PC-3 (cell line): ENCODE measurements at regions of chr11 and their contacts with region 1.

Region 1: DNA sequence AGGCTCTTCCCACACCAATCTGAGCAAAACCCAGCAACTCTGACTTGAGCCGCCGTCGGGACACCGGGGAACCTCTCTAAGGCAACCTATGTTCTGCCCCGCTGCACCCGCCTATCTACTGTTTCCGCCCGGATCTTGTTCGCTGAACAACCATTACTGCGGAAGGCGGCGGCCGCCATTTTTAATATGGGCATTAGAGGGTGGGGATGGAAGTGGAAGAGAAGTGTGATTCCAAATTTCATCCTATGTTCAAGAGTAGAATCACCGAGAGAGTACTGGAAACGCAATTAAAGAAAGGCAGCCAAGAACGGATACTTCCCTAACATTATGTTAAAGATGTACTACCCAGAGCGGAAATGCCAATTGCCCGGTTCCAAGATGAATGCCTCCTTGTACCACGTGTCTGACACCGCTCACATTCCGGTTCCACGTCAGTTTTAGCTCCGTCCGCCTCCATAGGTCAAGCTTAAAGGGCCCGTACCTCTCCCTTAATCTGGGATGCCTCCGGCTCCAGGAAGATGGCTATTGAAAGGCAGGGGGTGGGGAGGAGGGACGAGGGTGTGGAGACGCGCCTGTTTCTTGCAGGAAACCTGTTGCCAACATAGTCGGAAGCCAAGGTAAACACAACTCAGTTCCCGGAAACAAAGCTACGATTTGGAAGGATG is at the start of gene DPAGT1:
- DNase-seq: peak; percentile 99
- ATAC-seq: peak; percentile 81
- H3K4me3 ChIP-seq: peak within 1 kb of the TSS; percentile 89
- H3K27ac ChIP-seq: peak within 1 kb of the TSS; percentile 84
- H3K4me1 ChIP-seq: peaks cover 24% of the 10 kb centered on the region
- H3K27me3 ChIP-seq: no peaks in the 10 kb centered on the region
- CTCF ChIP-seq: no peak
- total RNA-seq, gene DPAGT1: 68.0 and 82.4 TPM in 2 replicates

Region 2: DNA sequence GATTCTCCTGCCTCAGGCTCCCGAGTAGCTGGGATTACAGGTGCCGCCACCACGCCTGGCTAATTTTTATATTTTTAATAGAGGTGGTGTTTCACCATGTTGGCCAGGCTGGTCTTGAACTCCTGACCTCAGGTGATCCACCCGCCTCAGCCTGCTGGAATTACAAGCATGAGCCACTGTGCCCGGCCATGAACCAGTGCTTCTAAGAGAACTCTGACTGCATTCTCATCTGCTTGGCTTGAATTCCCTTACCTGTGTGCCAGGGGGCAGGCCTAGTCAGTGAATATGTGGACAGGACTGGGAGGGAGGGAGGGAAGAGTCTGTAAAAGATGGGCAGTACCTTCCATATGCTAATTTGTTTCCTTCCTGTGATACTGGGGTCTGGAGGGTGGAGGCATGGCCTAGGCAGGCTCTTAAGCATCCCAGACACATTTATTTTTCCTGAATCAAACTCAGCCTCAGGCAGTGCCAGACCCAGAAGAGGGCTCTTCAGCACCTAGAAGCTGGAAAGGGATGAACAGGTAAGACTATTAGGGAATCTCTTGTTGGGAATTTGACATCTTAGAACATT is 90.3 kb before region 1 on chr11:
- CTCF ChIA-PET with region 1: no interaction called
- POLR2A ChIA-PET with region 1: interaction called, 10 read pairs
- intact Hi-C with region 1: no loop called
- DNase-seq: no peak
- ATAC-seq: peak; percentile 21
- H3K4me3 ChIP-seq: no peak overlapping the region
- H3K27ac ChIP-seq: no peak overlapping the region
- H3K4me1 ChIP-seq: peaks cover 6% of the 10 kb centered on the region
- H3K27me3 ChIP-seq: no peaks in the 10 kb centered on the region
- CTCF ChIP-seq: no peak

Region 3: GRCh38 chr11:119030329-119031049 is 71.4 kb before region 1 on chr11 and contains the start of gene SLC37A4:
- CTCF ChIA-PET with region 1: no interaction called
- POLR2A ChIA-PET with region 1: no interaction called
- intact Hi-C with region 1: loop called (anchors 2 kb)
- DNase-seq: peak; percentile 100
- ATAC-seq: peak; percentile 84
- H3K4me3 ChIP-seq: peak within 1 kb of the TSS; percentile 96
- H3K27ac ChIP-seq: peak within 1 kb of the TSS; percentile 15; the same call in 1 of the 2 replicates
- H3K4me1 ChIP-seq: peaks cover 16% of the 10 kb centered on the region
- H3K27me3 ChIP-seq: no peaks in the 10 kb centered on the region
- CTCF ChIP-seq: peak; percentile 93
- total RNA-seq, gene SLC37A4: 31.4 and 35.4 TPM in 2 replicates

Region 4: GRCh38 chr11:119067371-119068222 is 34.3 kb before region 1 on chr11 and contains the start of gene VPS11:
- CTCF ChIA-PET with region 1: interaction called, 3 read pairs
- POLR2A ChIA-PET with region 1: interaction called, 18 read pairs
- intact Hi-C with region 1: loop called (anchors 2 kb)
- DNase-seq: peak; percentile 99
- ATAC-seq: peak; percentile 98
- H3K4me3 ChIP-seq: peak within 1 kb of the TSS; percentile 87
- H3K27ac ChIP-seq: peak within 1 kb of the TSS; percentile 43
- H3K4me1 ChIP-seq: peaks cover 14% of the 10 kb centered on the region; the same call in 1 of the 2 replicates
- H3K27me3 ChIP-seq: no peaks in the 10 kb centered on the region
- CTCF ChIP-seq: no peak
- total RNA-seq, gene VPS11: 48.3 and 48.7 TPM in 2 replicates

Region 5: DNA sequence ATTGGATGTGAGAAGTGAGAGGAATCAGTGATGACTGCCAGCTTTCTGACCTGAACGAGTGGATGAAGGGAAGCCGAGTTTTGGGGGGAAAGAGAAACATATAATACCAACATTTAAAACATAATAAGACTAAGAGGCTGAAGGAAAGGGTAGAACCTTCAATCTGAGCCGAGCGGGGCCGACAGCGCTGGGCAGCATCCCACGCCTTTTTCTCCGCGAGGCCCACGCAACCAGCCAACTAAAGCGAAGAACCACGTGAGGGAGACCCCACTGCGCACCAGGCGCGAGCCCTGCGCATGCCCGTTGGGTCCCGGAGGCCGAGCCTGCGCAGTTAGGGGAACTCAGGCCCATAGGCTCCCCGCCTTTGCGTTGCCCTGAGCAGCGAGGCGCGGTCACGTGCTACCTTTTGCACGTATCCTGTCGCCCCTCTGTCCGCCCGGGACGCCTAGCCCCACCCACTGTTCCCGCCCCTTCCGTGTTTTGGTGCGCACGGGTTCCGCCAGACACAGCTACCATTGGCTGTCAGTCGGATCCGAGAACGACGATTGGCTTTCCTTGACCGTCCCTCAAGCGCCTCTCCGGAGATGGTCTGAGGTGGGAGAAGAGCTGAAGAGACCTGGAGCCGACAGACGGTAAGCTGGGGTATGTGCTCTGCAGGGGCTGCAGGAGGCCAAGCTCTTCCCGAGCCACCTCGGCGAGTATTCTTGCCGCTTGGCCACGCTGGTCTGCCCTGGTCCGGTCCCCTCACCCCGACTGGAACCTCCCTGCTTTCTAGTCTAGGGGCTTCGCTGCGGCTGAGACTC is 19.3 kb after region 1 on chr11 and contains the start of gene HINFP:
- CTCF ChIA-PET with region 1: interaction called, 8 read pairs
- POLR2A ChIA-PET with region 1: interaction called, 14 read pairs
- intact Hi-C with region 1: loop called (anchors 2 kb)
- DNase-seq: peak; percentile 100
- ATAC-seq: peak; percentile 96
- H3K4me3 ChIP-seq: peak within 1 kb of the TSS; percentile 91
- H3K27ac ChIP-seq: peak within 1 kb of the TSS; percentile 35
- H3K4me1 ChIP-seq: peaks cover 15% of the 10 kb centered on the region
- H3K27me3 ChIP-seq: no peaks in the 10 kb centered on the region
- CTCF ChIP-seq: no peak
- total RNA-seq, gene HINFP: 14.7 and 24.7 TPM in 2 replicates

Region 6: DNA sequence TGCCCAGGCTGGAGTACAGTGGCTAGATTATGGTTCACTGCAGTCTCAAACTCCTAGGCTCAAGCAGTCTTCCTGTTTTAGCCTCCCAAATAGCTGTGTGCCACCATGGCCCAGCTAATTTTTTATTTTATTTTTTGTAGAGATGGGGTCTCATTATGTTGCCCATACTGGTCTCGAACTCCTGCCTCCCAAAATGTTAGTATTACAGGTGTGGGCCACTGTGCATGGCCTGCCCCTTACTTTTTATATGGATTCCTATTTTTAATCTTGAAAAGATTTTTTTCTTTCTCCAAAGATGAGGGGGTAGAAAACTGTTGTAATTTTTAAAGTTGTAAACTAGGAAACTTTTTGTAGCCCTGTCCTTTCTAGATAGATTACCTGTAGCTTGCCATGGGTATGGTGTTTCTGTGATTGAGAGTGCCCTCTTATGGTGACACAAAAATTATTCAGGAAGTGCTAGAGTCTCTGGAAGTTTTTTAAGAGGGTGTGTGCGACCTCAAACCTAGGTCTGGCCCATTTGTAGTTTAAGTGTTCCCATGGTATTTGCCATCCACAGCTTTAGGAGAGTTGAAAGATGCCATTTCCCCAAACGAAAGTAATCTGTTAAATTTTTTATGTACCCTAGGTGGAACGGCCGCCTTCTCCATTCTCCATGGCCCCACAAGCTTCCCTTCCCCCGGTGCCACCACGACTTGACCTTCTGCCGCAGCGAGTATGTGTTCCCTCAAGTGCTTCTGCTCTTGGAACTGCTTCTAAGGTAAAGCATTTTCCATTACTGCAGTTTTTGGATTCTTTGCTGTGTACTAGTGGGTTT is 182.7 kb after region 1 on chr11:
- CTCF ChIA-PET with region 1: interaction called, 11 read pairs
- POLR2A ChIA-PET with region 1: no interaction called
- intact Hi-C with region 1: no loop called
- DNase-seq: peak; percentile 73
- ATAC-seq: peak; percentile 89
- H3K4me3 ChIP-seq: no peak overlapping the region
- H3K27ac ChIP-seq: no peak overlapping the region
- H3K4me1 ChIP-seq: no peaks in the 10 kb centered on the region
- H3K27me3 ChIP-seq: no peaks in the 10 kb centered on the region
- CTCF ChIP-seq: peak; percentile 83